Endothelial cell of umbilical vein (primary cell): ENCODE measurements at regions of chr4 and their contacts with region 1.

Region 1: DNA sequence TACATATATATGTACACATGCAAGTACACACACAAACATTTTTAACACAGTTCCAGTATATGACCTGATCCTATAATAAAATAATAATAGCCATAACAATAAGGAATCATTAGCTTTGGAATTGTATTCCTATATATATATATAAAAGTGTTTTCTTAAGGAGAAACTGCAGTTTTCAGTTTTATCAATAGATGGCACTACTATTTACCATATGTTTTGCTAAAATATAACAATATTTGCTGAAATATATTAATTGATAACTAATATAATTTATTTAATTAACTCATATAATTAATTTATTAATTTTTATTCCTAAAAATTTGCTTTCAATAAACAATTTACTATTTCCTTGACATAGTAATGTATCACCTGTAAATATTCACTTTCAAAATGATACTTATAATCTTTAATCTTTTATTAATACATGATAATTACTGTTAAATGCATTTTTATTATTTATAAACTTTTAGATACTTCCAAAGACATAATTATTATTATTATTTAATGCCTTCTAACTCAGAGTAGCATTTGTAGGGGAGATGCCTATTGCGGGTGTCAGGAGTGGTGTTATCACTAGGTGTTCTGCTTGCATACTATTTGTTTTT is 599.5 kb downstream of the FSTL5 start:
- DNase-seq: peak; percentile 17
- H3K4me3 ChIP-seq: no peak overlapping the region
- H3K27ac ChIP-seq: no peak overlapping the region
- H3K4me1 ChIP-seq: peaks cover 27% of the 10 kb centered on the region
- H3K27me3 ChIP-seq: no peaks in the 10 kb centered on the region
- CTCF ChIP-seq: no peak
- POLR2A ChIP-seq: no peak

Region 2: GRCh38 chr4:161546902-161547301 is 17.4 kb before region 1 on chr4:
- CTCF ChIA-PET with region 1: no interaction called
- POLR2A ChIA-PET with region 1: no interaction called
- dilution Hi-C with region 1: no loop called
- intact Hi-C with region 1: no loop called
- DNase-seq: no peak
- H3K4me3 ChIP-seq: no peak overlapping the region
- H3K27ac ChIP-seq: no peak overlapping the region
- H3K4me1 ChIP-seq: no peaks in the 10 kb centered on the region
- H3K27me3 ChIP-seq: no peaks in the 10 kb centered on the region
- CTCF ChIP-seq: no peak
- POLR2A ChIP-seq: no peak

Region 3: DNA sequence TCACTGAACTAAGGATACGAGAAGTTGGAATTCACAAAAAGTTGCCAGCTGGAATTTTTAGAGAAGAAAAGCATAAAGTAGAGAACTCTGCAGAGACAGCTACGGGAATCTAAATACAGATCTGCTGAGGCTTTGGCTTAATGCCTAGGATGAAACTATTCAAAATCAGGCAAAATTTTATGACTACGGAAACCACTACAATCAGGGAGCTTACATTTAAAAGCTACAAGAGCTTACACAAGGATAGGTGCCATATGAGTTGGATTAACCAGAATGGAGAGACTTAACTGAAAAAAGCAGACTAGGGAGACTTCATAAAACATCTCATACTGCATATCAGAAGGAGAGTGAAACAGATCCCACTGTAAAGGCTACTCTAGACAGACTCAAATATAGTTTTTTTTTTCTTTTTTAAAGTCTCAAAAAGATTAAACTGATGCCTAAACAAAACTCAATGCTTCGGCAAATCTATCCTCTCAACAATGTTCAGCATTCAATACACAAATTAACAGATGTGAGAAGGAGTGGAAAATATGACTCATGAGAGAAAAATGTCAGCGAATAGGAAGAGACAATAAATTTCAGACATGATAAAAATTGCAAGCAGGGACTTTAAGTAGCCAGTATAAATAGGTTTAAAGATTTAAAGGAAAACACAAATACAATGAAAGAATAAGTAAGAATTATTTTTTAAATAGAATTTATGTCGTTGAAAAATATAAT is 13.4 kb after region 1 on chr4:
- CTCF ChIA-PET with region 1: interaction called, 6 read pairs
- POLR2A ChIA-PET with region 1: no interaction called
- dilution Hi-C with region 1: no loop called
- intact Hi-C with region 1: loop called (anchors 1 kb)
- DNase-seq: peak; percentile 92
- H3K4me3 ChIP-seq: peak overlapping the region in 2 of 3 experiments; percentile 5 to 38
- H3K27ac ChIP-seq: peak overlapping the region; percentile 89
- H3K4me1 ChIP-seq: peaks cover 27% of the 10 kb centered on the region
- H3K27me3 ChIP-seq: no peaks in the 10 kb centered on the region
- CTCF ChIP-seq: no peak
- POLR2A ChIP-seq: no peak

Region 4: GRCh38 chr4:161680146-161680545 is 115.8 kb after region 1 on chr4:
- CTCF ChIA-PET with region 1: interaction called, 3 read pairs
- POLR2A ChIA-PET with region 1: interaction called, 3 read pairs
- dilution Hi-C with region 1: no loop called
- intact Hi-C with region 1: loop called (anchors 1 kb)
- DNase-seq: peak; percentile 85
- H3K4me3 ChIP-seq: no peak overlapping the region
- H3K27ac ChIP-seq: peak overlapping the region; percentile 73
- H3K4me1 ChIP-seq: peaks cover 24% of the 10 kb centered on the region
- H3K27me3 ChIP-seq: no peaks in the 10 kb centered on the region
- CTCF ChIP-seq: no peak
- POLR2A ChIP-seq: peak; percentile 26

Region 5: DNA sequence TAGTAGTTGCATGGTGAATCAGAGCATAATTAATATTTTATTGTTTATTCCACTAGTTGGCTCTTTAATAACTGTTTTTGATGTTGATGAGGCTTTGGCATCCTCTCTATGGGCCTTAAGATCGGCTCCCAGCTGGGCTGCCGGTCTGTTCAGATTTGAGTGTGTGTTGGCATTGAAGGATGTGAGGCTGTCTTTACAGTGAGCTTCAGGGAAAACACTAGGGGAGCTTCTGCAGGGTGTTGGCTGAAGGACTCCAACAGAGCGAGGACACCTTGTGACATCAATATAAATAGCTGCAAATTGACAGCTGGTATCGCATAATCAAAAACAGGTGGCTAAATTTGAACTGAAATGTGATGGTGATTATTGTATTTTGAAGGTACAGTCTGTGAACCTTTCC is 277.4 kb after region 1 on chr4:
- CTCF ChIA-PET with region 1: no interaction called
- POLR2A ChIA-PET with region 1: no interaction called
- dilution Hi-C with region 1: no loop called
- intact Hi-C with region 1: no loop called
- DNase-seq: no peak
- H3K4me3 ChIP-seq: no peak overlapping the region
- H3K27ac ChIP-seq: no peak overlapping the region
- H3K4me1 ChIP-seq: no peaks in the 10 kb centered on the region
- H3K27me3 ChIP-seq: no peaks in the 10 kb centered on the region
- CTCF ChIP-seq: no peak
- POLR2A ChIP-seq: no peak

Region 6: DNA sequence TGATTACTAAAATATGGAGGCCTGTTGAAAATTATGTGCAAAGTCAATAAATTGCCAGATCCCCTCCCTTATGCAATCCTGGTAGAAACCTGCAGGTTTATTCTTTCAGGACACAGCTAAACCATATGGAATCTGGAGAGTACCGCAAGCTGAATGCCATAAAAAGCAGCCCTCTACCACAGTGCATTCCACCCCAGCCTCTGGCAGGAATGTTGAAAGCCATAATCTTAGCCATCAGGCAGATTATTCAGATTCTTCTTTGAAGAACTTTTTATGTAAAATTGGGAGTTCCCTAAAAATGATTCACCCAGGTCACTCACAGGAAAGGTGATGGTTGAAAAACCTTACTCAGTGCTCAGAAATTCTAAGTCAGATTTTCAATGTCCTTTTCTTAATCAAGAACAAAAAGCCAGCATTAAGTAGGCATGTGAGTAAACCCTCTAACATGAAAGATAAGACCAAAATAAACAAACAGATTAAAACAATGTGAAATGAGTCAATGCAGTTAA is 372.3 kb after region 1 on chr4:
- CTCF ChIA-PET with region 1: interaction called, 4 read pairs
- POLR2A ChIA-PET with region 1: no interaction called
- dilution Hi-C with region 1: no loop called
- intact Hi-C with region 1: loop called (anchors 1 kb)
- DNase-seq: peak; percentile 91
- H3K4me3 ChIP-seq: no peak overlapping the region
- H3K27ac ChIP-seq: peak overlapping the region; percentile 74
- H3K4me1 ChIP-seq: peaks cover 37% of the 10 kb centered on the region
- H3K27me3 ChIP-seq: no peaks in the 10 kb centered on the region
- CTCF ChIP-seq: no peak
- POLR2A ChIP-seq: no peak

Region 7: DNA sequence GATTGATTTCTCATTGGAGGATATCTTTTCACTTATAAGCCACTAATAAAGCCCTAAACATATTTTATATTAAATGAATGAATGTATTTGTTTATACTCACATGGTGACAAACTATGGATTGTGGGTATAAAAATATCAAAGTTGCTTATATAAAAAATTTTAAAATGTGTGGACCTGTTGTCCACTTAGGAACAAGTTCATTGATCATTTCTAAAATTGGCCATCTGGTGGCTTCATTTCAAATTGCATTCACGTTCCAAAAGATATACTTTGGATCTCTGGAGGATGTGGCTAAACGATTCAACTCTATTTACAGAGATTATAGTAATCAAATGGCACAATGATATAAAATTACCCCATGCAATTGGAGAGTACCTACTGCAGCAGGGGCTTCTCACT is 566.9 kb after region 1 on chr4:
- CTCF ChIA-PET with region 1: interaction called, 5 read pairs
- POLR2A ChIA-PET with region 1: no interaction called
- dilution Hi-C with region 1: no loop called
- intact Hi-C with region 1: loop called (anchors 1 kb)
- DNase-seq: peak; percentile 7
- H3K4me3 ChIP-seq: no peak overlapping the region
- H3K27ac ChIP-seq: no peak overlapping the region
- H3K4me1 ChIP-seq: no peaks in the 10 kb centered on the region
- H3K27me3 ChIP-seq: peaks cover 0 to 1% of the 10 kb centered on the region in 2 experiments
- CTCF ChIP-seq: peak in 1 of 2 donors; percentile 1
- POLR2A ChIP-seq: no peak